Psoas muscle (tissue), 8 donors: ENCODE measurements at regions of chr12 and their contacts with region 1.

Region 1: DNA sequence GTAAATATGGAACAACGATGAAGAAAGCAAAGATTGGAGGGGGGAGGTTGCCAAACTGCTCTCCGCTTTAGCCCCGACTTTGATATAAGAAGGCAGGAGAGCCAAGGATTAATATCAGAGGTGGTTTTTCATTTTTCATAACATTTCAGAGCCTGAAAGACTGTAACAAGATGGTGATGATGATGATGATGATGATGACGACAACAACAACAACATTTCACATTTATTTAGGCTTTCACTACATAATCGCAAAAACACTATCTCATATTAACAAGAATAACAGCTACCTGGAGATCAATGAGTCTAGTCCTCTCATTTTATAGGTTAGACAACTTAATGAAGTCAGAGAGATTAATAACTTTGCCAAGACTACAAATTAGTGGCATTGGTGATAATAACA is 86.1 kb downstream of the ANKS1B start:
- DNase-seq: no peak
- ATAC-seq: no peak
- H3K4me3 ChIP-seq: no peak overlapping the region
- H3K27ac ChIP-seq: no peak overlapping the region
- H3K4me1 ChIP-seq: no peaks in the 10 kb centered on the region
- H3K27me3 ChIP-seq: no peaks in the 10 kb centered on the region
- CTCF ChIP-seq: no peak

Region 2: DNA sequence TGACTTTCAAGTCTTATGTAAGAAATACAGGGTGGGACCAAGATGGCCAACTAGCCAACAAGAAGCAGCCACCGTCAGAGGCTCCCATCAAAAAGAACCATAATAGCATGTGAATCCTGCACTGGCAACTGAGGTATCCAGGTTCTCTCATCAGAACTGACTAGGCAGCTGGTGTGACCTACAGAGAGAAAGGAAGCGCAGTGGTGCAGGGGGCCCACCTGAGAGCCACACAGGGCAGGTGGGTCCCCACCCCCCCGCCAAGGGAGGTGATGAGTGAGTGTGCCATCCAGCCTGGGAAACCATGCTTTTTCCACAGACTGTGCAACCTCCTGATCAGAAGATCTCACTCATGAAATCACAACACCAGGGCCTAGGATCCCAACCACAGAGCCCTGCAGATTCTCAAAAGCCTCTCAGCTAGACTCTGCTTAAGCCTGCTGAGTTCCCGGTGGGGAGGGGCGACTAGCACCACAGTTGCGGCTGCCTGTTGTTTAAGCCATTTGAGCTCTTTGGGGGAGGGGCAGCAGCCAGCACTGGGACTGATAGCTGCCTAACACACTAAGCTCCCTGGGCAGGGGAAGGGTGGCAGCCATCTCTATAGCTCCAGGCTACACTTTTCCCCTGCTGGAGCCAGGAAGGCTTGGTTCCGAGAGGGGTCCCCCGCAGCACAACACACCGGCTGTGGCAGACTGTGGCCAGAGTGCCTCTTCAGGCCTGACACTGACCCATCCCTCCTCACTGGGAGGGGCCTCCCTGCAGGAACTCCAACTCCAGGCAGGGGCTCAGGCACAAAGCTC is 175.8 kb before region 1 on chr12:
- intact Hi-C with region 1: no loop called
- DNase-seq: no peak
- ATAC-seq: no peak
- H3K4me3 ChIP-seq: no peak overlapping the region
- H3K27ac ChIP-seq: no peak overlapping the region
- H3K4me1 ChIP-seq: no peaks in the 10 kb centered on the region
- H3K27me3 ChIP-seq: no peaks in the 10 kb centered on the region
- CTCF ChIP-seq: no peak

Region 3: GRCh38 chr12:100069795-100070194 is 171.1 kb after region 1 on chr12:
- intact Hi-C with region 1: no loop called
- DNase-seq: no peak
- ATAC-seq: no peak
- H3K4me3 ChIP-seq: no peak overlapping the region
- H3K27ac ChIP-seq: no peak overlapping the region
- H3K4me1 ChIP-seq: no peaks in the 10 kb centered on the region
- H3K27me3 ChIP-seq: no peaks in the 10 kb centered on the region
- CTCF ChIP-seq: no peak

Region 4: DNA sequence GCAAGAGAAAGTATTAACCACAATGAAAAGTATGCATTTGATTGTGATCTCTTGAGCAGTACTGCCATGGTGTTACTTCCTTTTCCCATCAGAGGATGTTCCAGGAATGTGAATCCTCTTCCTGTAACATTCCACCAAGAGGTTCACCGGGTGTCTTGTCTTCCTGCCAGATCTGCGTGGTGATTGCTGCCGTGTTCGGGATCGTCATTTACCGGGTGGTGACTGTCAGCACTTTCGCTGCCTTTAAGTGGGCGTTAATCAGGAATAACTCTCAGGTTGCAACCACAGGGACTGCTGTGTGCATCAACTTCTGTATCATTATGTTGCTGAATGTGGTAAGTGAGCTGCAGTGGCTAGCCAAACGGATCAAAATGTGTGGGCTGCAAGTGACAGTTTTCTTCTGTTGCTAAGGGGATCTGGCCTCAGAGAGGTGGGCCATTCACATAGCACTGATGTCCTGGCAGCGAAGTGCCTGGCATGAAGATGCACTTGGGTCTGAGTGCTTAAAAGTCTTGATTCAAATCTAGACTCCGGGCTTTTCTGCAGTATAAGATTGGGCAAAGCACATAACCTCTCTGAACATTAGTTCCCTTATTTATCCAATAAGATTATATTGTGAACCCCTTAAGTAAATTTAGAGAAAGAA is 1188.0 kb after region 1 on chr12:
- intact Hi-C with region 1: loop called in 1 of 2 experiments (anchors 10 kb)
- DNase-seq: no peak
- ATAC-seq: no peak
- H3K4me3 ChIP-seq: no peak overlapping the region
- H3K27ac ChIP-seq: no peak overlapping the region
- H3K4me1 ChIP-seq: no peaks in the 10 kb centered on the region
- H3K27me3 ChIP-seq: no peaks in the 10 kb centered on the region
- CTCF ChIP-seq: no peak